Activated naive CD4-positive, alpha-beta T cell treated with anti-CD3 and anti-CD28 coated beads for 36 hours (primary cell): ENCODE measurements at regions of chrX and their contacts with region 1.

Region 1: DNA sequence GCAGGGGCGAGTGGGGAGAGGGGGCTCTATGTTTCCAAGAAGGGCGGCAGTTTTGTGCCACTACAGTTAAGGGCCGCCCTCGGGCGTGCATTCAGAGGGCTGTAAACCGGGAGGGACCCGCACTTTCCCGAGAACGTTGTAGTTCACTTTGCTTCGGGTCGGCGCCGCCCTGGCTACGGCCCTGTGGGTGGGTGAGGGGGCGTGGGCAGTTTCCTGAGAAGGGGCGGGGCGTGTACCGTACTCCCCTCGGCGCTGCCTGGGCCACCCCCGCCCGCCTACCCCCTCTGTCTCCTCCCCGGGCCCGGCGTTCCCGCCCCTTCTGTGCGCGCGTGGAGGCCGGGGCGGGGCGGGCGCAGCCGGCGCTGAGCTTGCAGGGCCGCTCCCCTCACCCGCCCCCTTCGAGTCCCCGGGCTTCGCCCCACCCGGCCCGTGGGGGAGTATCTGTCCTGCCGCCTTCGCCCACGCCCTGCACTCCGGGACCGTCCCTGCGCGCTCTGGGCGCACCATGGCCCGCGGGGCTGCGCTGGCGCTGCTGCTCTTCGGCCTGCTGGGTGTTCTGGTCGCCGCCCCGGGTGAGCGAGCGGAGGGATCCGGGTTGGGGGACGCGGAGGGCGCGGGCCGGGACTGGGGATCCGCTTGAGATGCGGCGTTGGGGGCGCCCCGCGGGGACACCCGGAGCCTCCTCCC is at the start of gene CD99:
- DNase-seq: peak; percentile 87
- H3K4me3 Mint-ChIP-seq: peak within 1 kb of the TSS; percentile 99
- H3K27ac Mint-ChIP-seq: peak within 1 kb of the TSS; percentile 99
- H3K4me1 Mint-ChIP-seq: peaks cover 28% of the 10 kb centered on the region
- H3K27me3 Mint-ChIP-seq: no peaks in the 10 kb centered on the region
- total RNA-seq, gene CD99: 205 to 215 TPM

Region 2: GRCh38 chrX:1468250-1468772 is 1222.7 kb before region 1 on chrX:
- CTCF ChIA-PET with region 1: no interaction called
- intact Hi-C with region 1: loop called (anchors 5 kb)
- DNase-seq: peak; percentile 93
- H3K4me3 Mint-ChIP-seq: peak overlapping the region; percentile 60
- H3K27ac Mint-ChIP-seq: peak overlapping the region; percentile 77
- H3K4me1 Mint-ChIP-seq: peaks cover 80% of the 10 kb centered on the region
- H3K27me3 Mint-ChIP-seq: no peaks in the 10 kb centered on the region

Region 3: GRCh38 chrX:1591102-1591900 is 1099.7 kb before region 1 on chrX and contains the start of gene AKAP17A:
- CTCF ChIA-PET with region 1: no interaction called
- intact Hi-C with region 1: loop called (anchors 5 kb)
- DNase-seq: peak; percentile 98
- H3K4me3 Mint-ChIP-seq: peak within 1 kb of the TSS; percentile 91
- H3K27ac Mint-ChIP-seq: peak within 1 kb of the TSS; percentile 89
- H3K4me1 Mint-ChIP-seq: peaks cover 31% of the 10 kb centered on the region
- H3K27me3 Mint-ChIP-seq: no peaks in the 10 kb centered on the region
- total RNA-seq, gene AKAP17A: 59.2 to 60.5 TPM